B cell (primary cell): ENCODE measurements at regions of chr9 and their contacts with region 1.

Region 1: GRCh38 chr9:130042833-130043653 is at the start of gene FNBP1:
- DNase-seq: peak; percentile 88
- ATAC-seq: peak; percentile 76
- H3K4me3 ChIP-seq: peak within 1 kb of the TSS; percentile 74 to 97 (median 95)
- H3K4me3 Mint-ChIP-seq: peak within 1 kb of the TSS; percentile 100
- H3K27ac ChIP-seq: peak within 1 kb of the TSS; percentile 81 to 93
- H3K27ac Mint-ChIP-seq: peak within 1 kb of the TSS; percentile 98
- H3K4me1 ChIP-seq: peaks cover 51 to 62% of the 10 kb centered on the region in 2 donors
- H3K4me1 Mint-ChIP-seq: peaks cover 63% of the 10 kb centered on the region
- H3K27me3 ChIP-seq: no peaks in the 10 kb centered on the region
- H3K27me3 Mint-ChIP-seq: no peaks in the 10 kb centered on the region
- CTCF ChIP-seq: no peak
- total RNA-seq, gene FNBP1: 318 and 337 TPM in 2 replicates

Region 2: GRCh38 chr9:129726322-129727160 is 316.5 kb before region 1 on chr9:
- CTCF ChIA-PET with region 1: no interaction called
- POLR2A ChIA-PET with region 1: no interaction called
- intact Hi-C with region 1: no loop called
- DNase-seq: peak; percentile 56
- ATAC-seq: peak; percentile 75
- H3K4me3 ChIP-seq: no peak overlapping the region
- H3K4me3 Mint-ChIP-seq: peak overlapping the region; percentile 26
- H3K27ac ChIP-seq: no peak overlapping the region
- H3K27ac Mint-ChIP-seq: no peak overlapping the region
- H3K4me1 ChIP-seq: peaks cover 5% of the 10 kb centered on the region in 2 donors
- H3K4me1 Mint-ChIP-seq: no peaks in the 10 kb centered on the region
- H3K27me3 ChIP-seq: peaks cover 0 to 14% (median 5%) of the 10 kb centered on the region in 4 experiments
- H3K27me3 Mint-ChIP-seq: peaks cover 26% of the 10 kb centered on the region
- CTCF ChIP-seq: peak; percentile 81

Region 3: GRCh38 chr9:129823935-129824601 is 219.0 kb before region 1 on chr9 and contains the start of gene TOR1A:
- CTCF ChIA-PET with region 1: no interaction called
- POLR2A ChIA-PET with region 1: no interaction called
- intact Hi-C with region 1: loop called (anchors 5 kb)
- DNase-seq: peak; percentile 95
- ATAC-seq: peak; percentile 92
- H3K4me3 ChIP-seq: peak within 1 kb of the TSS in 4 of 5 experiments; percentile 49 to 83 (median 76)
- H3K4me3 Mint-ChIP-seq: peak within 1 kb of the TSS; percentile 86
- H3K27ac ChIP-seq: peak within 1 kb of the TSS in 1 of 2 donors; percentile 68
- H3K27ac Mint-ChIP-seq: peak within 1 kb of the TSS; percentile 81
- H3K4me1 ChIP-seq: peaks cover 7 to 8% of the 10 kb centered on the region in 2 donors
- H3K4me1 Mint-ChIP-seq: peaks cover 16% of the 10 kb centered on the region
- H3K27me3 ChIP-seq: no peaks in the 10 kb centered on the region
- H3K27me3 Mint-ChIP-seq: no peaks in the 10 kb centered on the region
- CTCF ChIP-seq: no peak
- total RNA-seq, gene TOR1A: 30.3 and 35.3 TPM in 2 replicates

Region 4: GRCh38 chr9:129962889-129963703 is 79.9 kb before region 1 on chr9:
- CTCF ChIA-PET with region 1: interaction called, 9 read pairs
- POLR2A ChIA-PET with region 1: interaction called, 7 read pairs
- intact Hi-C with region 1: loop called (anchors 2 kb)
- DNase-seq: peak; percentile 88
- ATAC-seq: peak; percentile 96
- H3K4me3 ChIP-seq: peak overlapping the region; percentile 43 to 81 (median 58)
- H3K4me3 Mint-ChIP-seq: peak overlapping the region; percentile 83
- H3K27ac ChIP-seq: peak overlapping the region; percentile 93 to 96
- H3K27ac Mint-ChIP-seq: peak overlapping the region; percentile 93
- H3K4me1 ChIP-seq: peaks cover 30 to 35% of the 10 kb centered on the region in 2 donors
- H3K4me1 Mint-ChIP-seq: peaks cover 61% of the 10 kb centered on the region
- H3K27me3 ChIP-seq: no peaks in the 10 kb centered on the region
- H3K27me3 Mint-ChIP-seq: no peaks in the 10 kb centered on the region
- CTCF ChIP-seq: no peak

Region 5: GRCh38 chr9:130010151-130010988 is 32.7 kb before region 1 on chr9:
- CTCF ChIA-PET with region 1: interaction called, 6 read pairs
- POLR2A ChIA-PET with region 1: interaction called, 8 read pairs
- intact Hi-C with region 1: loop called (anchors 1 kb)
- DNase-seq: peak; percentile 91
- ATAC-seq: peak; percentile 65
- H3K4me3 ChIP-seq: no peak overlapping the region
- H3K4me3 Mint-ChIP-seq: peak overlapping the region; percentile 61
- H3K27ac ChIP-seq: peak overlapping the region; percentile 96 to 98
- H3K27ac Mint-ChIP-seq: peak overlapping the region; percentile 93
- H3K4me1 ChIP-seq: peaks cover 67 to 70% of the 10 kb centered on the region in 2 donors
- H3K4me1 Mint-ChIP-seq: peaks cover 74% of the 10 kb centered on the region
- H3K27me3 ChIP-seq: no peaks in the 10 kb centered on the region
- H3K27me3 Mint-ChIP-seq: no peaks in the 10 kb centered on the region
- CTCF ChIP-seq: no peak

Region 6: DNA sequence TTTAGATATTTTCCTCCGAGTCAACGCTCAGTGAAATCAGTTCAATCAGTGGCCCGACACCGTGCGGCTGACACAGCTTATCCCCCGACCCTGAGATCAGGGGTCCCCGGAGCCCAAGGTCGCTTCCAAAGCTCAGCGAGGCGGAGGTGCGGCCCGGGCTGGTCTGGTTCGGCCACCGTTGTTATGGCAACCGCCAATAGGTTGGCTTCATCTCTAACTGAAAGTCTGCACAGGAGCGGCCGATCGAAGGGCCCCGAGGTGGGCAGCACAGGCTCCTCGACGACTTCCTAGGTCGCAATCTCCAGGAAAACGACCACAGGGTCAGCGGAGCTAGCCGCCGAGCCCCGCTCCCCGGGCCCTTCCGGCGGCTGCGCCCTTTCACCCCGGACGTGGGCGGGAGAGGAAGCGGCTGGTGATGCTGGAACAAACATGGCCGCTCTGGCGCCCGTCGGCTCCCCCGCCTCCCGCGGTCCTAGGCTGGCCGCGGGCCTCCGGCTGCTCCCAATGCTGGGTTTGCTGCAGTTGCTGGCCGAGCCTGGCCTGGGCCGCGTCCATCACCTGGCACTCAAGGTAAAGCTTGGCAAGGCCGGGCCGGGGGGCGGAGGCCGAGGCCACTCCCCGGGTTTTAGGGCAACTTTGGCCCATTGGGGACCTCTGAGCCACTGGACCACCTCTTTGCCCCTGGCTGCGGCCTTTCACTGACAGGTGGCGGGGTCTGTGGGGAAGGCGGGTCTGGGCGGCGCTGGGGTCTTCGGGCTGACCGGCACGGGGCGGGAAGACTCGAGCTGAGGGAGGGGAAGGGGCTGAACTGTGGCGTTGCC is 10.7 kb after region 1 on chr9 and contains the start of gene GPR107:
- CTCF ChIA-PET with region 1: interaction called, 8 read pairs
- POLR2A ChIA-PET with region 1: interaction called, 18 read pairs
- intact Hi-C with region 1: loop called (anchors 1 kb)
- DNase-seq: peak; percentile 87
- ATAC-seq: peak; percentile 97
- H3K4me3 ChIP-seq: peak within 1 kb of the TSS; percentile 78 to 96 (median 88)
- H3K4me3 Mint-ChIP-seq: peak within 1 kb of the TSS; percentile 91
- H3K27ac ChIP-seq: peak within 1 kb of the TSS; percentile 64 to 95
- H3K27ac Mint-ChIP-seq: peak within 1 kb of the TSS; percentile 88
- H3K4me1 ChIP-seq: peaks cover 14 to 20% of the 10 kb centered on the region in 2 donors
- H3K4me1 Mint-ChIP-seq: peaks cover 30% of the 10 kb centered on the region
- H3K27me3 ChIP-seq: no peaks in the 10 kb centered on the region
- H3K27me3 Mint-ChIP-seq: no peaks in the 10 kb centered on the region
- CTCF ChIP-seq: no peak
- total RNA-seq, gene GPR107: 26.8 and 28.1 TPM in 2 replicates

Region 7: GRCh38 chr9:131733541-131734061 is 1690.6 kb after region 1 on chr9:
- CTCF ChIA-PET with region 1: no interaction called
- POLR2A ChIA-PET with region 1: no interaction called
- intact Hi-C with region 1: loop called (anchors 5 kb)
- DNase-seq: peak; percentile 68
- ATAC-seq: no peak
- H3K4me3 ChIP-seq: peak overlapping the region; percentile 11 to 52 (median 29)
- H3K4me3 Mint-ChIP-seq: peak overlapping the region; percentile 78
- H3K27ac ChIP-seq: peak overlapping the region; percentile 99 to 100
- H3K27ac Mint-ChIP-seq: peak overlapping the region; percentile 88
- H3K4me1 ChIP-seq: peaks cover 86 to 97% of the 10 kb centered on the region in 2 donors
- H3K4me1 Mint-ChIP-seq: peaks cover 91% of the 10 kb centered on the region
- H3K27me3 ChIP-seq: no peaks in the 10 kb centered on the region
- H3K27me3 Mint-ChIP-seq: no peaks in the 10 kb centered on the region
- CTCF ChIP-seq: no peak